ENCODE measurements at regions of chr10 and their contacts with region 1.

Region 1: DNA sequence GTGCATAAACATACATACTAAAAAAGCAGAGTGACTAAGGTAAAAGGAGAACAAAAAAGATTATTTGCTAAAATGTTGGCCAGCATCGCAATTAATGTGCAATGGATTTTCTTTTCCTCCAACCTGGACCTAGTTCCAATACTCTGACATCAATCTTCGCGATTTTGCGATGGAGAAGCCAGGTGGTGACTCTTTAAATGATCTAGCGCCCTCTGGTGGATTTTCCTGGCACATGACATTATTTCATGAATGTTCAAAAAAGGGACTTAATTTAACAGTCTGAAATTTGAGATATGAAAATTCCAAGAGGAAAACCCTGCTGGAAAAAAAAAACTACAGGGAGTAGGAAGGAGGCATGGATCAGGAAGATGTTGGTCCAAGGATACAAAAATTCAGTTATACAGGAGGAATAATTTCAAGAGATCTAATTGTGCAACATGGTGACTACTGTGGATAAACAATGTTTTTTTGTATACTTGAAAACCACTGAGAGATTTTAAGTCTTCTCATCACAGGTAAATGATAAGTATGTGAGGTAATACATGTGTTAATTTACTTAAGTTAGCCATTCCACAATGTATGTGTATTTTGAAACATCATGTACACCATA is 4.3 kb upstream of the KCNMA1 start:
- DNase-seq: peak; percentile 100
- ATAC-seq: peak; percentile 13
- H3K4me3 ChIP-seq: no peak overlapping the region
- H3K27ac ChIP-seq: peak overlapping the region; percentile 2
- H3K4me1 ChIP-seq: peaks cover 35% of the 10 kb centered on the region
- H3K27me3 ChIP-seq: no peaks in the 10 kb centered on the region
- CTCF ChIP-seq: peak; percentile 100

Region 2: DNA sequence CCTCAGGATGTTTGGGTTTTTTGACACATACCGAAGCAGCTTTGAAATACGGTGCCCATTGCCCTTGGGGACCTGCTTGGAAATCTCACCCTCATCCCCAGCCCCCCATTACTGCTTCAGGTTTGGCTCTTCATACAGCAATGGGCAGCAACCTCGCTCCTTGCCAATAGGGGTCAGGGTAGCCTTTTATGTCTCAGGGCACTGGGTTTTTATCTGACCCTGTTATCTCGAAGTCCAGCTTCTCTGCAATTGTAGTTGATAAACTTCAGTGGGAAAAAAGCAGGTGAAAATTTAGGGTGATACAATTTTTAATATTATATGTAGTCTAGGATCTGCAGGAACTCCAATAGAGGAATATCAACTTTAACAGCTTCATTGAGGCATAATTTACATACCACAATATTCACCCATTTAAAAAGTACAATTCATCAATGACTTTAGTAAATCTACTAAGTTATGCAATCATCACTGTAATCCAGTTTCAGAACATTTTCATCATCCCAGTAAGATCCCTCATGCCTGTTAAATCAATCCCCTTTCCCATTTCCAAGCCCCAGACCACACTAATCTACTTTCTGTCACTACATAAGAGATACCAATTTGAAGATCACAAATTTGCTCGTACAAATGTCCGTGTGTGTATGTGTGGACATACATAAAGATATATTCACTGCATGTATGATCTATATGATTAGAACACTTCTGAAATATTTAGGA is 390.4 kb before region 1 on chr10:
- CTCF ChIA-PET with region 1: interaction called, 5 read pairs
- POLR2A ChIA-PET with region 1: no interaction called
- intact Hi-C with region 1: loop called (anchors 1 kb)
- DNase-seq: peak; percentile 92
- ATAC-seq: peak; percentile 72
- H3K4me3 ChIP-seq: no peak overlapping the region
- H3K27ac ChIP-seq: no peak overlapping the region
- H3K4me1 ChIP-seq: peaks cover 20% of the 10 kb centered on the region
- H3K27me3 ChIP-seq: no peaks in the 10 kb centered on the region
- CTCF ChIP-seq: peak; percentile 100

Region 3: DNA sequence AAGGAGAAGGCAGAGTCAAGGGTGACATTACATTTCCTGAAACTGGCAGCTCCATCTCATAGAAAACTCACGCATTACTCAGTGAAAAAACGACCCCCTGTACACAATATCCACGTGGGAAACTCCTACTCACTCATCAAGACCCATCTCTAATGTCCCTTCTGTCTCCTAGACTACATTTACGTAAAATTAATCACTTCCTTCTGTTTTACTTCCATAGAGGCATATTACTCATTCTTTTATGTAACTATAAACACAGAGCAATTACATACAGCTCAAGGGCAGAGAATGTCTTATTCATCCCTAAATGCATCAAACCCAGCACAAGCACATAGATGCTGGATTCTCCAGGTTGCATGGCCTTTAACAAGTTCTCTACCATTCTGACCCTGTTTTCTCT is 286.0 kb before region 1 on chr10:
- CTCF ChIA-PET with region 1: interaction called, 4 read pairs
- POLR2A ChIA-PET with region 1: interaction called, 3 read pairs
- intact Hi-C with region 1: loop called (anchors 2 kb)
- DNase-seq: peak; percentile 100
- ATAC-seq: peak; percentile 83
- H3K4me3 ChIP-seq: no peak overlapping the region
- H3K27ac ChIP-seq: peak overlapping the region; percentile 86
- H3K4me1 ChIP-seq: peaks cover 60% of the 10 kb centered on the region
- H3K27me3 ChIP-seq: no peaks in the 10 kb centered on the region
- CTCF ChIP-seq: no peak

Region 4: GRCh38 chr10:77428691-77429395 is 213.1 kb before region 1 on chr10:
- CTCF ChIA-PET with region 1: interaction called, 5 read pairs
- POLR2A ChIA-PET with region 1: no interaction called
- intact Hi-C with region 1: loop called (anchors 2 kb)
- DNase-seq: peak; percentile 92
- ATAC-seq: peak; percentile 68
- H3K4me3 ChIP-seq: no peak overlapping the region
- H3K27ac ChIP-seq: no peak overlapping the region
- H3K4me1 ChIP-seq: peaks cover 10% of the 10 kb centered on the region
- H3K27me3 ChIP-seq: no peaks in the 10 kb centered on the region
- CTCF ChIP-seq: peak; percentile 98

Region 5: GRCh38 chr10:77504873-77505257 is 137.0 kb before region 1 on chr10:
- CTCF ChIA-PET with region 1: interaction called, 4 read pairs
- POLR2A ChIA-PET with region 1: no interaction called
- intact Hi-C with region 1: loop called (anchors 1 kb)
- DNase-seq: peak; percentile 100
- ATAC-seq: peak; percentile 48
- H3K4me3 ChIP-seq: peak overlapping the region; percentile 15; the same call in 1 of the 2 replicates
- H3K27ac ChIP-seq: peak overlapping the region; percentile 82
- H3K4me1 ChIP-seq: peaks cover 80% of the 10 kb centered on the region
- H3K27me3 ChIP-seq: no peaks in the 10 kb centered on the region
- CTCF ChIP-seq: peak; percentile 90

Region 6: DNA sequence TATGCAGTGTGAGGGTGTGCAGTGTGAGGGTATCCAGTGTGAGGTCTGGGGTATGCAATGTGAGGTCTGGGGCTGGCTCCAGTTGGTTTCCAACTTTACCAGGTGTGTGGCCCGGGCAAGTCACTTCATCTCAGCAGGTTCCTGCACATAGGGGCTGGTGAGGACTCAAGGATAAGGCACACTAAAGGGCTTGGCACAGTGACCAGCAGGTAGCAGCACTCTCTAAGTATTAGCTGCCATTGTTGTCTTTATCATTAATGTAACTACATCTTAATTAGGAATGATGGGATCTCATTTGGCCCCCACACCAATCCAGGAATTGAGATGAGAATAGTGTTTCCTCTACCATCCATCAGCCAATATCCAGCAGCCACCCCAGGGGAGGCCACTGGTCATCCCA is 121.6 kb before region 1 on chr10:
- CTCF ChIA-PET with region 1: interaction called, 18 read pairs
- POLR2A ChIA-PET with region 1: no interaction called
- intact Hi-C with region 1: loop called (anchors 2 kb)
- DNase-seq: no peak
- ATAC-seq: peak; percentile 8; the same call in 1 of the 2 replicates
- H3K4me3 ChIP-seq: no peak overlapping the region
- H3K27ac ChIP-seq: no peak overlapping the region
- H3K4me1 ChIP-seq: peaks cover 26% of the 10 kb centered on the region
- H3K27me3 ChIP-seq: no peaks in the 10 kb centered on the region
- CTCF ChIP-seq: peak; percentile 47; the same call in 1 of the 2 replicates

Region 7: DNA sequence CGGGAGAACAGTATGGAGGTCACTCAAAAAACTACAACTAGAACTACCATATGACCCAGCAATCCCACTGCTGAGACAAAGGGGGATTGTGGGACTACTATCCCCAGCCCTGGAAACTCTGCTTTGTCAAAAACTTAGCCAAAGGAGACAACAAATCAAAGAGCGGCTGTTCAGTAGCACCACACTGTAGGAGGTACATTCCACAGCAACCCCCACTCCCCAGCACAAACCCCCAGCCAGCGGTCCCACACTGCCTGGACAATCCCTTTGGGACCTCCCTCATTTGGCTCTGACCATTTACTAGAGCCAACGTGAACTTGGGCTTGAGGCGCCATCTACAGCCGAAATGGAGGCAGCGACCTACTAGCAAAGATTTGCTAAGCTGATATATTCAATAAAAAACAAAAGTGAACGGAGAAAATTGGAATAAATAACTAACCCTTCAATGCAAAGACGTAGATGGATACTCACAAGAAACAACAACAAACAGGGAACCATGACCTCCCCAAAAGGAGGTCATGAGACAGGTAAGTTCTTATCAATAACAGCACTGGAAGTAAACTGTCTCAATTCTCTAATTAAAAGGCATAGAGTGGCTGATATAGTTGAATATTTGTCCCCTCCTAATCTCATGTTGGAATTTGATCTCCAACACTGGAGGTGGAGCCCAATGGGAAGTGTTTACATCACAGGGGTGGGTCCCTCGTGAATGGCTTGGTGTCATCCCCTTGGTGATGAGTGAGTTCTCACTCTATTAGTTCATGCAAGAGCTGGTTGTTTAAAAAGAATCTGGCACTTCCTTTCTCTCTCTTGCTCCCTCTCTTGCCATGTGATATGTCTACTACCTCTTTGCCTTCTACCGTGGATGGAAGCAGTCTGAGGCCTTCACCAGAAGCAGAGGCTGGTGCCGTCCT is 114.7 kb after region 1 on chr10:
- CTCF ChIA-PET with region 1: interaction called, 6 read pairs
- POLR2A ChIA-PET with region 1: no interaction called
- intact Hi-C with region 1: loop called (anchors 1 kb)
- DNase-seq: peak; percentile 98
- ATAC-seq: peak; percentile 97
- H3K4me3 ChIP-seq: no peak overlapping the region
- H3K27ac ChIP-seq: no peak overlapping the region
- H3K4me1 ChIP-seq: peaks cover 3% of the 10 kb centered on the region; the same call in 1 of the 2 replicates
- H3K27me3 ChIP-seq: no peaks in the 10 kb centered on the region
- CTCF ChIP-seq: peak; percentile 100

Measured in PC-3 (cell line).